ENCODE measurements at regions of chr22 and their contacts with region 1.

Region 1: GRCh38 chr22:41832553-41833368 is at the start of gene SREBF2:
- DNase-seq: peak; percentile 97
- ATAC-seq: peak; percentile 97
- H3K4me3 Mint-ChIP-seq: peak within 1 kb of the TSS; percentile 97
- H3K27ac Mint-ChIP-seq: peak within 1 kb of the TSS; percentile 99
- H3K4me1 Mint-ChIP-seq: peaks cover 32% of the 10 kb centered on the region
- H3K27me3 Mint-ChIP-seq: no peaks in the 10 kb centered on the region
- total RNA-seq, gene SREBF2: 108 to 109 TPM

Region 2: DNA sequence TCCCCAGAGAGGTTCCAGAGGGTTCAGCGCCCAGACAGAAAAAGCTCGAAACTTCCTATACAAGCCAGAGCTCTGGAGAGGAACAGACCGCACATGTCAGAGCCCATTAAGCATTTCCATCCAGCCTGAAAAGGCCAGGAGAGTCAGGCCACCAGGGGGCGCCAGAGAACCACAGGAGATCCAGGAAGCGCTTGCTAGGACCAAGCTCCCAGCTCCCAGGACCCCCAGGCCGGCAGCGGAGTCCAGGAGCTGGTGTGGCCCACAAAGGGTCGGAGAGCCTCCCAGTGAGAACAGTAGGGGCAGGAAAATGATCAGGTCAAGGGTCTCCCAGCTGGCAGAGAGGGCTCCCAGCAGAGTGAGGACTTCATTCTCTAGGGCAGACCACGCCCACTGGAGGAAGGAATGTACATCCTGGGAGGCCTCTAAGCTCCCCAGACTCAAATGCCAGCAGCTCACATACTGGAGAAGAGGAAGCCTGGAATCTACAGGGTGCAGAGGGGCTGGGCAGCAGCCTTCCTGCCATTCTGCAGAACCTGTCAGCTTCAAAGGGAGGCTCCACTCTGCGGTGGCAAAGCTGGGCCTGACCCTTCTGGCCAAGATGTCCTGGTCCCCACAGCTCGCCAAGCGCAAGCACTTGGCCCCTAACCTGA is 135.5 kb before region 1 on chr22:
- POLR2A ChIA-PET with region 1: interaction called, 10 read pairs
- DNase-seq: peak; percentile 96
- ATAC-seq: peak; percentile 65
- H3K4me3 Mint-ChIP-seq: peak overlapping the region; percentile 24
- H3K27ac Mint-ChIP-seq: peak overlapping the region; percentile 77
- H3K4me1 Mint-ChIP-seq: peaks cover 12% of the 10 kb centered on the region
- H3K27me3 Mint-ChIP-seq: peaks cover 3% of the 10 kb centered on the region

Region 3: GRCh38 chr22:41780746-41781505 is 51.8 kb before region 1 on chr22:
- POLR2A ChIA-PET with region 1: interaction called, 21 read pairs
- DNase-seq: peak; percentile 76
- ATAC-seq: peak; percentile 99
- H3K4me3 Mint-ChIP-seq: peak overlapping the region; percentile 82
- H3K27ac Mint-ChIP-seq: peak overlapping the region; percentile 96
- H3K4me1 Mint-ChIP-seq: peaks cover 39% of the 10 kb centered on the region
- H3K27me3 Mint-ChIP-seq: no peaks in the 10 kb centered on the region

Region 4: DNA sequence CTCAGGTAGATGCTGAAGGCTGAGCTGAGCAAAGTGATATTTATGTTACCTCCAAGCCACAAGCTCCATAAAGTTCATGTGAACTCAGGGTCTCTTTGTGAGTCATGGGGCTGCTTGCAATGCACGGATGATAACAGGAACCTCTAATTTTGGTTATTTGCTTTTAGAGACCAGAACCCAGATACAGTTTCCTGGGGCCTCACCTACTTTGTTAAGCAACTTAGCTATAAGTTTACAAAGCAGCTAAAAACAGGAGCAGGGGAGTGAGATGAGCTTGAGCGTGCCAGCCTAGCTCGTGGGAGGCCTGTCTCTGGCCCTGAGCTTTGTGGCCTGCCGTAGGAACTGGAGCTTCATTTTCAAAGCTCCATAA is 29.4 kb after region 1 on chr22:
- POLR2A ChIA-PET with region 1: interaction called, 10 read pairs
- DNase-seq: no peak
- ATAC-seq: peak; percentile 51
- H3K4me3 Mint-ChIP-seq: peak overlapping the region; percentile 42
- H3K27ac Mint-ChIP-seq: no peak overlapping the region
- H3K4me1 Mint-ChIP-seq: peaks cover 37% of the 10 kb centered on the region
- H3K27me3 Mint-ChIP-seq: no peaks in the 10 kb centered on the region

Region 5: DNA sequence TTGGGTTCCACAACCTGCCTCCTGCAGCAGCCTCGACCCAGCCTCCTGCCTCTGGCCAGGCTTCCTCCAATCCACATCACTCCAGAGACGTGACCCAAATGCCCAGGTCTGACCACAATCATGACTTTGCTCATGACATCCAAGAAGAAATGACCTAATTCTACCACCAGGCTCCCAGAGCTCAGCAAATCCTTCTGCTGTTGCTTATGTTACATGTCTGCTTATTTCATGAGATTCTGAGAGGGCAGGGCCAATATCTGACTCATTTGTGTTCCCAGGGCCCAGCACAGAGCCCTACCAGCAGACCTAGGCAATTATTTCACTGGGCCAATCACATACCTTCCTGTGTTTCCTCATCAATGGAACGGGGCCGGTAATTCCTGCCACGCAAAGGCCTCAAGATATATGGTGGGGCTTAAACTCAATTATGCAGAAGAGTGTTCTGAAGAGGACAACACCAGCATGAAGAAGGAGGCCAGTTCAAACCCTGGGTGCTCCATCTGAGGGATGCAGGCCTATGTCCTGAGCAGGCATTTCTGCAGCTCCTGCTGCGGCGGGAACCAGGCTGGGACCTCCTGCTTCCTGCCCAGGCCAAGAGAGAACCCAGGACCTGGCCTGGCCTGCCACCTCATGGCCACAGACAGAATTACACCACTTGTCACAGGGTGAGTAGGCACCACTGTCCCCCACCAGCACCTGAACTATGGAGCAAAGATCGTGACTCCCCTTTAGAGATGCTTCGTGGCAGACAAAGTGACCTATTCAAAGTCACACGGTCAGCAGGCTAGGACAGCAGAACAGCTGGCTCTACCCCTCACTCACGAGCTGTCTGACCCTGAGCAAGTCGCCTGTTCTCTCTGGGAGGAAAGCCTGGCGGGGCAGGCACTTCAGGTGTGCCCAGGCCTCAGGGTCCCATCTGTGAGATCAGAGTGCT is 108.3 kb after region 1 on chr22:
- POLR2A ChIA-PET with region 1: interaction called, 22 read pairs
- DNase-seq: peak; percentile 88
- ATAC-seq: peak; percentile 75
- H3K4me3 Mint-ChIP-seq: peak overlapping the region; percentile 18
- H3K27ac Mint-ChIP-seq: peak overlapping the region; percentile 91
- H3K4me1 Mint-ChIP-seq: peaks cover 44% of the 10 kb centered on the region
- H3K27me3 Mint-ChIP-seq: no peaks in the 10 kb centered on the region

Region 6: DNA sequence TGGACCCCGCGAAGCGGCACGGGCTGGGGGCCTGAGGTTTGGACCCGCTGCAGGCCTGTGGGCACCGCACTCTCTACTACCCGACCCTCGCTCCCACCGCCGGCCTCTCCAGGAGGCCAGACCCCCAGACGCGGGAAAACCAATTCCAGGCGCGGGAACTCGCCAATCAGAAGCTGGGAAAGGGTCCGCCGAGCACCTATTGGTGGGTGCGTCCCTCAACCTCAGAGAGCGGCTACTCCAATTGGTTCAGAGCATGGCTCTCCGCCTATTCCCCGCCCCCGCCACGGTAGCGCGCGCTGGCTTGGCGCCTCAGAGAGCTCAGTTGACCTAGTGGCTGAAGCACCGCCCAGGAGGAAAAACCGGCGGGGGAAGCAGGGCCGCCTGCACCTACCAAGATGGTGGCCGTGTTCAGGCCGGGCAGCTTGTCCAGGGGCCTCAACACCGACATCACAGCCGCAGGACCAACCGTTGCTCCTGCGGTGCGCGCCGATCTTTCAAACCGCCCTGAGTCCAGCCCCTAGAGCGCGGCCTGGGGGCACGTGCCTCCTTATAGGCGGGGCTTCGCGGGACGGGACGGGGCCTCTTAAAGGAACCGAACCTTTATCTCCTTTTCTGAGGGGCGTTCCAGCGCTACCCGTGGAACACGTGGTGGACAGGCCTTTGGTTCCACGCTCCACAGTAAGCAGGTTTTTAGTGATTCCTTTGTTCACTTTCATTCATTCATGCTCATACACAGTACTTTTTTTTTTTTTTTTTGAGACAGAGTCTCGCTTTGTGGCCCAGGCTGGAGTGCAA is 114.1 kb after region 1 on chr22 and contains the start of gene CENPM:
- POLR2A ChIA-PET with region 1: interaction called, 22 read pairs
- DNase-seq: peak; percentile 94
- ATAC-seq: peak; percentile 98
- H3K4me3 Mint-ChIP-seq: peak within 1 kb of the TSS; percentile 94
- H3K27ac Mint-ChIP-seq: peak within 1 kb of the TSS; percentile 91
- H3K4me1 Mint-ChIP-seq: peaks cover 31% of the 10 kb centered on the region
- H3K27me3 Mint-ChIP-seq: no peaks in the 10 kb centered on the region
- total RNA-seq, gene CENPM: 45.4 to 53.2 TPM